Heart right ventricle (tissue), 16 donors: ENCODE measurements at regions of chr18 and their contacts with region 1.

Region 1: GRCh38 chr18:1585879-1586488 is 681.3 kb downstream of the ADCYAP1 start:
- DNase-seq: no peak
- ATAC-seq: peak in 2 of 8 donors; percentile 51 to 76
- H3K4me3 ChIP-seq: no peak overlapping the region
- H3K27ac ChIP-seq: no peak overlapping the region
- H3K4me1 ChIP-seq: no peaks in the 10 kb centered on the region
- H3K27me3 ChIP-seq: peaks cover 0 to 8% (median 0%) of the 10 kb centered on the region in 7 donors
- CTCF ChIP-seq: peak in 8 of 9 donors; percentile 30 to 69 (median 60)

Region 2: GRCh38 chr18:1522249-1522615 is 63.8 kb before region 1 on chr18:
- intact Hi-C with region 1: no loop called
- DNase-seq: no peak
- ATAC-seq: no peak
- H3K4me3 ChIP-seq: no peak overlapping the region
- H3K27ac ChIP-seq: no peak overlapping the region
- H3K4me1 ChIP-seq: no peaks in the 10 kb centered on the region
- H3K27me3 ChIP-seq: no peaks in the 10 kb centered on the region
- CTCF ChIP-seq: no peak

Region 3: DNA sequence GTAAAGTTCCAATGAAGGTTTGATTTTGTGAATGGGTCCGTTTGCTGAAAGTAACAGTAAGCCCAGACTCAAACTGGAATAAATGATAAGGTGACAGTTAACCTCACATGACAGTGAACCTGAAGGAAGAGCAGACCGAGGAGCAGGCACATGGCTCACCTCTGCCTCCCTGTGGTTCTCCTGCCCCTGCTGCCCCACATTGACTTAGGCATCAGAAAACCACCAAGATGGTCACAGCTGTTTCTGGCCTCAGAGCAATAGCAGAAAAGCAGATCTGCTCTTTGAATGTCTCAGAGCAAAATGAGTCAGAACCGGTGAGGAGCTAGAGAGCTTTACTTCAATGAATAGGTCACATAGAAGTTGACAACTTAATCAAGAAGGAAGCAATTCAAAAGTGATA is 497.7 kb after region 1 on chr18:
- intact Hi-C with region 1: loop called in 2 of 10 experiments (anchors 10 kb)
- DNase-seq: peak in 1 of 2 donors; percentile 8
- ATAC-seq: no peak
- H3K4me3 ChIP-seq: no peak overlapping the region
- H3K27ac ChIP-seq: no peak overlapping the region
- H3K4me1 ChIP-seq: peaks cover 0 to 13% (median 7%) of the 10 kb centered on the region in 9 donors
- H3K27me3 ChIP-seq: no peaks in the 10 kb centered on the region
- CTCF ChIP-seq: peak in 7 of 9 donors; percentile 21 to 38 (median 31)

Region 4: GRCh38 chr18:2121221-2121620 is 535.2 kb after region 1 on chr18:
- intact Hi-C with region 1: loop called in 1 of 10 experiments (anchors 10 kb)
- DNase-seq: no peak
- ATAC-seq: no peak
- H3K4me3 ChIP-seq: no peak overlapping the region
- H3K27ac ChIP-seq: no peak overlapping the region
- H3K4me1 ChIP-seq: no peaks in the 10 kb centered on the region
- H3K27me3 ChIP-seq: no peaks in the 10 kb centered on the region
- CTCF ChIP-seq: peak in 5 of 9 donors; percentile 10 to 48 (median 37)

Region 5: DNA sequence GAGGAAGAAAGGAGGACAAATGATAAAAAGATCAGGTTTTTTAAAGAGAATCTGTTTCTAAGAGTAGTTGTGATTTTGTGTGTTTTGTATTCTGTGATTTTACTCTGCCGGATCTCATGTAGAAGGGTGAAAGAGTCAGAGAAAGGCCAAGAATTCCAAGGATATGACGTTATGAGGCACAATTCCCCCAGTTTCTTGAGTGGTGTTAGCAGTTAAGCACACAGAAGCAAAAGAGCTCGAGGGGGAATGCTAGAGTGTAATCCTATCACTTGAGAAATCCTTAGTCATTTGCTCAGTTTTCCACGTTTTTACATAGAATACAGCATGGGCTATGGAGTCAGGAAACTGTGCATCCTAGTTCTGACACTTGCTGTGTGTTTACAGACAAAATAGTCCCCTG is 950.5 kb after region 1 on chr18:
- intact Hi-C with region 1: loop called in 7 of 10 experiments (anchors 5 to 10 kb)
- DNase-seq: no peak
- ATAC-seq: peak in 5 of 8 donors; percentile 30 to 85 (median 56)
- H3K4me3 ChIP-seq: no peak overlapping the region
- H3K27ac ChIP-seq: peak overlapping the region in 2 of 10 donors; percentile 7 to 22
- H3K4me1 ChIP-seq: no peaks in the 10 kb centered on the region
- H3K27me3 ChIP-seq: no peaks in the 10 kb centered on the region
- CTCF ChIP-seq: no peak